ENCODE measurements at regions of chr21 and their contacts with region 1.

Region 1: DNA sequence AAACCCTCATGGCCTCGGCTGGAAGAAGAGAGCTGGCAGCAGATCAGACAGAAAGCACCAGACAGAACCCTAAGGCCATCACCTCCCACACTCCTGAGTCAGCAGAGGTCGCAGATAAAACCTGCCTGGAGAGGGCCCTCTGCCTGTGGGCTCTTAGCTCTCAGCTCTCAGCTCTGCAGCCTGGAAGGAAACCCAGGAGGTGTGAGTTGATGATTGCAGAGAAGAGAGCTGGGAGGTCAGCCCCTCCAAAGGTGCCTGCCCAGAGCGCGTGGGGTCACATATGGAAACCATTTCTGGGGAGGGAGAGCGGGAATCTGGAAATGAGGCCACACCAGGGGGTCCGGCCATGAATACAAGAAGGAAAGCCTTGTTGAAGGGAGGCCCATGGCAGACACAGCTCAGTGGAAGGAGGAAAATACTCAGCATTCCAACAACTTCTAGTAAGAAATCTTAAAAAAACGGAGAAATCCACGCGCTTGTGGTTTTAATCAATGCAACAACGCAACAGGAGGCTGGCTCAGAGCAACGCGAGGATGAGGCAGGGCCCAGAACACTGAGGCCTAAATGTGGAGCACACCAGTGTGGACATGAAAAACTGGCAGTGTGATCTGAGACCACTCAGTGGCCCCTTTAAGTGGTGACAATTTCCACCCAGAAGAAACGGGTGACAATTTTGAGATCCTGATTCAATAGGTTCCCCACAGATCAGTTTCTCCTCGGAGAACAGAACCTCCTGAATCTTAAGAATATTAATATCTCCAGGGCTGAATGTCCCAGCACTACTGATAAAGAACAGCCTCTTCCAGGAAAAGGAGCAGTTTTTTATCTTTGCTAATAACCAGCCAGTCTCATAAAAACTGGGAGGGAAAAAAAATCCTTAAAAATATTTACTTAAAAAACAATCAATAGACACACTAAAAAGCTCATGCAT is 45.7 kb downstream of the PSMG1 start:
- DNase-seq: peak; percentile 31
- H3K4me3 ChIP-seq: no peak overlapping the region
- H3K27ac ChIP-seq: no peak overlapping the region
- H3K4me1 ChIP-seq: no peaks in the 10 kb centered on the region
- H3K27me3 ChIP-seq: no peaks in the 10 kb centered on the region
- CTCF ChIP-seq: no peak
- EP300 ChIP-seq: no peak
- POLR2A ChIP-seq: no peak

Region 2: DNA sequence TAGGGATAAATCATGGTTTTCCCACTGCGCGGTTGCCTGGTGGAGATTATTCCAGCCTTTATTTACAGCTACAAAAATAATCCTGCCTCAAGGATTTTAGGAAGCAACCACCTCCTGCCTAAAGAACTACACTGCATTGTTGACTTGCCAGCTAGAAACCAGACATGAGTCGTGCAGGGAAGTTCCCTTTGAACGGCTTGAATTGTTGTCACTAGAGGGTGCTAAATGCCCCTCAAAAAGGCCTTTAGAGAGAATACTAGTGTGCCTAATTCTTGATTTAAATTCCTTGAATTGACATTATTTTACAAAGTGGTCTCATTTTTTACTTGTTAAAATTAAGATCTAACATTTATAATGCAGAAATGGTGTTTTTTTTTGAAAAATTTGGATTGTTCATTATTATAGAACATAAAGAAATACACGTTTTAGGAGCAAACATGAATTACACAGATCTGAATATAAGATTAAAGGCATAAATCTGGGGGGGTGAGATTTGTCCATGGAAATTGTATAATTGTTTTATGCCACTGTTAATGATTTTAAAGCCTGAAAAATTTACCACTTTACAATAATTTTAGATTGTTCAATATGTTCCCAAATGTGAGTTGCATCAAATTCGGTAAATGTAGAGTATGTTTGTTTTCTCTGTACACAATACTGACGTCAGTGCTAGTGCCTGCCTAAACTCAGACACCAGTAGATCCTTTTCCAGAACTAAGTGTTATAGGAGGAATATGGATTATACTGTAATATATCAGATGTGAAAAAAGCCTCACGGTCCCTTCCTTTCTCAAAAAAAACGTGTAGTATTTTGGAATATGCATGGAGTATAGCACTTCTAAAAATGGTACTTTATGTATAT is 631.6 kb before region 1 on chr21:
- intact Hi-C with region 1: loop called (anchors 5 kb)
- DNase-seq: peak; percentile 39
- H3K4me3 ChIP-seq: peak overlapping the region; percentile 6 to 45 (median 19)
- H3K27ac ChIP-seq: no peak overlapping the region
- H3K4me1 ChIP-seq: peaks cover 0 to 3% (median 0%) of the 10 kb centered on the region in 4 donors
- H3K27me3 ChIP-seq: peaks cover 0 to 33% (median 0%) of the 10 kb centered on the region in 4 donors
- CTCF ChIP-seq: peak; percentile 42 to 61 (median 52)
- EP300 ChIP-seq: no peak
- POLR2A ChIP-seq: no peak

Region 3: DNA sequence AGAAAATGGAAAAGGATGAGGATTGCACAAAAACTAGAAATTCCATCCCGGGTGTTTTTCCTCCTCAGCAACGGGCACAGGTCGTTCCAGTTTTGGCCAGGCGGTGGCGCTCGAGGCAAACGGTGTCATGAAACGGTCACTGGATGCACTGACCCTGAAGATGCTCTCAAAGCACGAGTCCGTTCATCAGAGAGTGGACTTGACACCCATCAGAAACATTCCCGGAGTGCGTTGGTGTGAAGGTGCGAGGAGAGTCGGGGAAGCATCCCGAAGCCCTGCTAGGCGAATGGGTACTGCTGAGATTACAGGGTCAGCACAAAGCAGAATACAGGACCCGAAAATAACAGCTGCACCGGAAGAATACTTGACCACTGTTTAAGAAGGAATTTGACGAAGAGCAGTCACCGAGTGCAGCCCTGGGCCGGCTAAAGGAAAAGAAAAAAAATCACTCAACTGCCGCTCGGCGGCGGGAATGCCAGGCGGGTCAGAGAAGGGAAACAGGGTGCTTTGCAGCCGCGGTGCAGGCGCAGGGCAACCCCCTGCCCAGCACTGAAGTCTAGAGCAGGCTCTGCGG is 403.5 kb before region 1 on chr21:
- intact Hi-C with region 1: loop called (anchors 2 kb)
- DNase-seq: peak; percentile 98
- H3K4me3 ChIP-seq: peak overlapping the region; percentile 33 to 48 (median 40)
- H3K27ac ChIP-seq: peak overlapping the region; percentile 42 to 75 (median 63)
- H3K4me1 ChIP-seq: peaks cover 7 to 9% (median 7%) of the 10 kb centered on the region in 4 donors
- H3K27me3 ChIP-seq: peaks cover 0 to 11% (median 0%) of the 10 kb centered on the region in 4 donors
- CTCF ChIP-seq: peak; percentile 93 to 97 (median 93)
- EP300 ChIP-seq: no peak
- POLR2A ChIP-seq: no peak

Region 4: DNA sequence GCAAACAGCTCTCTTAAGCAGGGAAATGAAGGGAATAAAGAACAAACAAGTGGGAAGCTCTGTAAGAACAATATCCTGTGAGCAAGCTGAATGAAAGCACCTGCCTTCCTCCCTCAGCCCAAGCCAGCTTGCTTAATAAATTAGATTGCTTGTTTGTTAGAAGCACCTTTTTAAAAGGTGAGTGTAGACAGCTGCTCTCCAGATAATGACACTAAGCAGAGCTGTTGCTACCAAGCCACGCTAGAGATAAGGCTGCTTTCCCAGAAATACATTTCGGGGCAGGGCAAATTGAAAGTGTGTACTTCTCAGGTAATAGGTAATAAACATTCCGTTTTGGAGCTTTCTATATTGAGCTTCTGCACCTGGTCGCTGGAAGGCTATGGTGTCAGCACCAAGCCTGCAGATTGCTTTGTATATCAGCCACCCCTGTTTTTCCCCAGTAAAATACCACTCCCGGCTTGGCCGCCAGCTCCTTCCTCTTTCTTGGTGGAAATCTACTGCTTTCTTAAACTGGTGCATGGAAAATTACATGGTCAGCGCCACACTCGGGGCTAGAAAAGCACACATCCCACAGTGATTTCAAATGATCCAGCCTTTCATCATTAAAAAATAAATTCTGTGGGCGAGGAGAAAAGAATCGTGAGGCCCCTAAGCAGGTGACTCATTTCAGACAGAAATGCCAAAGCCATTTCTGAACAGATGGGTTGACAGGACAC is 180.5 kb before region 1 on chr21:
- intact Hi-C with region 1: no loop called
- DNase-seq: no peak
- H3K4me3 ChIP-seq: no peak overlapping the region
- H3K27ac ChIP-seq: no peak overlapping the region
- H3K4me1 ChIP-seq: peaks cover 14 to 31% (median 18%) of the 10 kb centered on the region in 4 donors
- H3K27me3 ChIP-seq: no peaks in the 10 kb centered on the region
- CTCF ChIP-seq: no peak
- EP300 ChIP-seq: no peak
- POLR2A ChIP-seq: no peak

Region 5: DNA sequence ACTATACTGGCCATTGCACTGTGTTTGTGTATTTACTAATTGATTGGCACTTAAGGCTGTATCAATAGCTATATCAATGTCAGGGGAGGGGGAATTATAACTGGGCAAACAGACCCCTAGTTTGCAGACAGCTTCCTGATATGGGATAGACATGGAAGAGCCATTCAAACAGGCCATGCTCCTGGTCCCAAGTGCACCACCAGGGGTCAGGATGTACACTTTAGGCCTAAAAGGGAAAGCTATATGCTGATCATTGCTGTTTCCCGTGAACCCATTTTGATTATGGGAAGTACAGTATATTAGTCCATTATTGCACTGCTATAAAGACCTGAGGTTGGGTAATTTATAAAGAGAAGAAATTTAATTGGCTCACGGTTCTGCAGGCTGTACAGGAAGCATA is 1905.5 kb after region 1 on chr21:
- intact Hi-C with region 1: no loop called
- DNase-seq: no peak
- H3K4me3 ChIP-seq: no peak overlapping the region
- H3K27ac ChIP-seq: no peak overlapping the region
- H3K4me1 ChIP-seq: peaks cover 0 to 2% (median 0%) of the 10 kb centered on the region in 4 donors
- H3K27me3 ChIP-seq: peaks cover 0 to 7% (median 0%) of the 10 kb centered on the region in 4 donors
- CTCF ChIP-seq: peak in 1 of 3 experiments; percentile 4
- EP300 ChIP-seq: no peak
- POLR2A ChIP-seq: no peak